ENCODE measurements at regions of chr18 and their contacts with region 1.

Region 1: GRCh38 chr18:2655178-2655953 is at the start of gene SMCHD1:
- DNase-seq: peak; percentile 76
- H3K4me3 Mint-ChIP-seq: peak within 1 kb of the TSS; percentile 86
- H3K27ac Mint-ChIP-seq: peak within 1 kb of the TSS; percentile 91
- H3K4me1 Mint-ChIP-seq: peaks cover 21% of the 10 kb centered on the region
- H3K27me3 Mint-ChIP-seq: no peaks in the 10 kb centered on the region
- CTCF ChIP-seq: no peak
- total RNA-seq, gene SMCHD1: 43.7 and 50.7 TPM in 2 replicates

Region 2: GRCh38 chr18:2571200-2572143 is 83.9 kb before region 1 on chr18 and contains the starts of genes METTL4 and NDC80:
- CTCF ChIA-PET with region 1: interaction called, 6 read pairs
- POLR2A ChIA-PET with region 1: interaction called, 192 read pairs
- intact Hi-C with region 1: loop called (anchors 1 kb)
- DNase-seq: peak; percentile 89
- H3K4me3 Mint-ChIP-seq: peak within 1 kb of the TSS; percentile 98
- H3K27ac Mint-ChIP-seq: peak within 1 kb of the TSS; percentile 99
- H3K4me1 Mint-ChIP-seq: peaks cover 45% of the 10 kb centered on the region
- H3K27me3 Mint-ChIP-seq: no peaks in the 10 kb centered on the region
- CTCF ChIP-seq: no peak
- total RNA-seq, gene METTL4: 11.8 and 15.0 TPM in 2 replicates
- total RNA-seq, gene NDC80: 20.4 and 29.6 TPM in 2 replicates

Region 3: GRCh38 chr18:2589345-2590068 is 65.9 kb before region 1 on chr18:
- CTCF ChIA-PET with region 1: interaction called, 3 read pairs
- POLR2A ChIA-PET with region 1: interaction called, 83 read pairs
- intact Hi-C with region 1: no loop called
- DNase-seq: peak; percentile 56
- H3K4me3 Mint-ChIP-seq: no peak overlapping the region
- H3K27ac Mint-ChIP-seq: peak overlapping the region; percentile 85
- H3K4me1 Mint-ChIP-seq: peaks cover 14% of the 10 kb centered on the region
- H3K27me3 Mint-ChIP-seq: no peaks in the 10 kb centered on the region
- CTCF ChIP-seq: no peak

Region 4: DNA sequence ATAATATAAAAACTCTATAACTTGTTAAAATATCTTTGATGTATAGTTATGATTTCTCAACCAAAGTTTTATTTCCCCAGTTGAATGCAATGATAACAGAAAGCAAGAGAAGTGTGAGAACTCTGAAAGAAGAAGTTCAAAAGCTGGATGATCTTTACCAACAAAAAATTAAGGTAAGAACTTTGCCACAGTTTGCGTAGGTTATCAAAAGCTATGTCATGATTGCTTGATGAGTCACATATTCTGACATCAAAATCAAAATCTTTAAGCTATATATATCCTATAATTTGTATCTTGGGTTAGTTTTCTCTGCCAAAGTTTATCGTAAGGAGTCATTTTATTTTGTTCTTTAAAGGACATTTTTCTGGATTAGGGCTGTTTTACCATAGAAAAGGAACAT is 49.0 kb before region 1 on chr18:
- CTCF ChIA-PET with region 1: no interaction called
- POLR2A ChIA-PET with region 1: interaction called, 39 read pairs
- intact Hi-C with region 1: loop called (anchors 5 kb)
- DNase-seq: no peak
- H3K4me3 Mint-ChIP-seq: peak overlapping the region; percentile 31
- H3K27ac Mint-ChIP-seq: peak overlapping the region; percentile 47
- H3K4me1 Mint-ChIP-seq: peaks cover 12% of the 10 kb centered on the region
- H3K27me3 Mint-ChIP-seq: no peaks in the 10 kb centered on the region
- CTCF ChIP-seq: no peak

Region 5: DNA sequence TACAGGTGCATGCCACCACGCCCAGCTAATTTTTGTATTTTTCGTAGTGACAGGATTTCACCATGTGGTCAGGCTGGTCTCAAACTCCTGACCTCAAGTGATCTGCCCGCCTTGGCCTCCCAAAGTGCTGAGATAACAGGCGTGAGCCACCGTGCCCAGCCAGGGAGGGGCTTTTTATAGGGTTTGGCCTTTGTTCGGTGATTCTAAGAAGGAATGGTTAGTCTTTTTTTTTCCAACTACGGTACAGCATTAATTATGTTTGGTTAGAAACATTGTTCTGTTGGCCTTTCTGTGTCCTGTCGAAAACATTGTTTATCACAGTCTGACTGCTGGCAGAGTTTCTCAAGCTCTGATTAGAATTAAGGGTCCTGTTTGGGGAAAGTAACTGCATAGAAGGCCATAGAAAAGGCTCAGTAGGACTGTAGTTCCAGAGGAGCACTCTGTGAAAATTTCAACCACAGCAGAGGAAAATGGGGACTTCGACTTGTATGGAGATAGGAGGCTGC is 19.2 kb before region 1 on chr18:
- CTCF ChIA-PET with region 1: no interaction called
- POLR2A ChIA-PET with region 1: interaction called, 10 read pairs
- intact Hi-C with region 1: no loop called
- DNase-seq: no peak
- H3K4me3 Mint-ChIP-seq: no peak overlapping the region
- H3K27ac Mint-ChIP-seq: no peak overlapping the region
- H3K4me1 Mint-ChIP-seq: peaks cover 17% of the 10 kb centered on the region
- H3K27me3 Mint-ChIP-seq: no peaks in the 10 kb centered on the region
- CTCF ChIP-seq: no peak

Region 6: GRCh38 chr18:2672410-2672809 is 17.0 kb after region 1 on chr18:
- CTCF ChIA-PET with region 1: interaction called, 3 read pairs
- POLR2A ChIA-PET with region 1: interaction called, 11 read pairs
- intact Hi-C with region 1: no loop called
- DNase-seq: no peak
- H3K4me3 Mint-ChIP-seq: no peak overlapping the region
- H3K27ac Mint-ChIP-seq: no peak overlapping the region
- H3K4me1 Mint-ChIP-seq: no peaks in the 10 kb centered on the region
- H3K27me3 Mint-ChIP-seq: no peaks in the 10 kb centered on the region
- CTCF ChIP-seq: no peak

Measured in MCF 10A (cell line).